GM10248 (cell line): ENCODE measurements at regions of chr18 and their contacts with region 1.

Region 1: DNA sequence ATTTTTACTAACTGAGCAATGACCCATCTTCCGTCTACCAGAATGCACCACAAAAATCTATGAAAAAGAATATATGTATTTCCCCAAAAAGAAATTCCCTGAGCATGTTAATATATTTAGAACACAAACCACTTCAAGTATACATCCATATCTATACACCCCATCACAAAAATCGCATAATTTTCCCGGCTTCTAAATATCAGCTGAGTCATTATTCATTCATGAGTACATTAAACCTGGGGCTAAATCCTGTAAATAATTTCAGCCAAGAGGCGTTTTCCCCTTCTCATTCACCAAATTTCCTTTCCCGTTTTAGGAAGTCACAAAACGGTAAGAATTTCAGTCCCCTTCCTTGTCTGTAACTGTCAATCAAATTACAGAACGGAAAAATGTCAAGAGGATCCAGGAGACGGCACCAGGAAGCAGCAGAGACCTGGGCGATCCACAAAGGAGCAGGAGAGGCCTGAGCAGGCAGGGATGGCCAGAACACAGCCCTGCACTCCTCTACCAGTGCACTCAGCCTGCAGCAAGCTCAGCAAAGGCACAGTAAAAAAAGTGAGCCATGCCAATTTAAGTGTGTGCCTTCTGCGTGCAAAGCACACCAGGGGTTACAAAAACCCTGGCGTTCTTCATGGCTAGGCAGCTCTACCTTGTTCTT is 300.7 kb downstream of the TCF4 start:
- DNase-seq: no peak
- CTCF ChIP-seq: no peak

Region 2: GRCh38 chr18:54946149-54946581 is 341.1 kb before region 1 on chr18:
- CTCF ChIA-PET with region 1: no interaction called
- POLR2A ChIA-PET with region 1: no interaction called
- DNase-seq: peak; percentile 17
- CTCF ChIP-seq: no peak

Region 3: DNA sequence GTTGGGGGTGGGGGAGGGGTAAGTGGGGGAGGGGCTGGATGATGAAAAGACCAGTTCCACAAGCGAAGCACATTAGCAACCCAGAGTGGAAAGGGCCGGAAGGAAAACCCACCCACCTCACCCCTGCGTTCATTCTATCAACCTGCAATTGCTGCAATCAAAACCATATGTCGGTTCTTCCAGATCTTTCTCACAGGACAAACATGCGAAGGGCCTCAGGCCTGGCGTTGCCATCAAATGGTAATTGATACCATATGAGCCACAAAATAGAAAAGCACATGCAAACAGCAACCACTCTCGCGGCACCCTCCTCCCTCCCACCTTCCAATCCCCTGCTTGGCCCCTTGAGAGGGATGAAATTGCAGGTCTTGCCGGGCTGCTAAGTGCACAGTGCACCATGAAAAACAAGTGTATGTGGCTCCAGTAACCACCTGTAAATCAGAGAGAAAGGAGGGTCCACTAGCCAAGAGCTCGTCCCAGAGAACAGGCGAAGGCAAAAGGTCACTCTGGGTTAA is 13.2 kb after region 1 on chr18:
- CTCF ChIA-PET with region 1: interaction called, 34 read pairs
- POLR2A ChIA-PET with region 1: no interaction called
- DNase-seq: no peak
- CTCF ChIP-seq: no peak